ENCODE measurements at regions of chr17 and their contacts with region 1.

Region 1: DNA sequence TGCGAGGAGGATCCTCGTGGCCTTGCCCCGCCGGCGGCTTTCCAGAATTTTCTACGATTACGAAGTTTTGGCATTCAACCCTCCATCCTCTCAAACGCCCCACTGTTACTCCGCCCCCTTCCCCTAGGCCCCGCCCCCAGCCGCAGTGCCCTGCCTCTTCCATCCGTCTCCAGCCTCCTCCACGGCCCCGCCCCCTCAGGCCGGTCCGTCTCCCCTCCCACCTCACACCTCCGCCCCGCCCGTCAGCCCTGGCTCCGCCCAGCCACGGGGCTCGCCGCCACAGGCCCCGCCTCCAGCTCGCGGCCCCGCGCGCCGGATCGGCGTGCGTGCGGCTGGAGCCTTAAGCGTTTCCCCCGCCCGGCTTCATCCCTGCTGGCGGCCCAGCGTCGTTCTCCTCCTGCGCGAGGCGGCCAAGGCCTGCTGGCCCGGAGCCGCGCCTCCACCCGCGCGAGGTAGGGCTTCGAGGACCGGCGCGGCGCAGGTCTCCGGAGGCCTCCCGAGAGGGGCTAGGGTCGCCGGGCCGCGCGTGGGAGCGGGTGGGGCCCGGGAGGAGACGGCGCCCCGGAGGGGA is at the starts of genes C17orf67 and DGKE:
- DNase-seq: peak; percentile 99
- H3K4me3 ChIP-seq: peak within 1 kb of the TSS; percentile 62 to 88 (median 78)
- H3K27ac ChIP-seq: peak within 1 kb of the TSS; percentile 83 to 95 (median 88)
- H3K4me1 ChIP-seq: peaks cover 0 to 54% (median 47%) of the 10 kb centered on the region in 4 donors
- H3K27me3 ChIP-seq: no peaks in the 10 kb centered on the region
- CTCF ChIP-seq: no peak
- EP300 ChIP-seq: no peak
- POLR2A ChIP-seq: peak in 1 of 2 donors; percentile 24
- total RNA-seq, gene C17orf67: 1.8 to 2.8 (median 2.1) TPM
- total RNA-seq, gene DGKE: 20.3 to 33.8 (median 29.2) TPM

Region 2: GRCh38 chr17:56624315-56624714 is 209.6 kb before region 1 on chr17:
- intact Hi-C with region 1: no loop called
- DNase-seq: no peak
- H3K4me3 ChIP-seq: no peak overlapping the region
- H3K27ac ChIP-seq: no peak overlapping the region
- H3K4me1 ChIP-seq: peaks cover 0 to 4% (median 2%) of the 10 kb centered on the region in 4 donors
- H3K27me3 ChIP-seq: no peaks in the 10 kb centered on the region
- CTCF ChIP-seq: no peak
- EP300 ChIP-seq: no peak
- POLR2A ChIP-seq: no peak

Region 3: DNA sequence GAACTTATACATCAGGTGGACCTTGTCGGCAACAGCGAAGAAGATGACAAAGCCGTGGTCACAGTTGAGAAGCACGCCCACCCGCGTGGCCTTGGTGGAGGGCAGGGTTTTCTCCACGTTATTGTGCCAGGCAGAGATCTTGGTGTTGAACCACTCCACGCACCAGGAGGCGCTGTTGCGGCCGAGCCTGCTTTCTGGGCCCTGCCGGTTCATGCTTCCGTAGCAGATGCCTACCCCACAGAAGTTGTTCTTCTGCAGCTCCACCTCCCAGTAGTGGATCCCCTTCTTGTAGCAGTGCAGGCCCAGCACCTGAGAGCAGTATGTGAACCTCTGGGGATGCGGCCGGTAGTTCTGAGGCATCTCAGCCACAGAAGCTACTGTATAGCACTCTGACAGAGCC is 57.9 kb after region 1 on chr17:
- intact Hi-C with region 1: no loop called
- DNase-seq: no peak
- H3K4me3 ChIP-seq: no peak overlapping the region
- H3K27ac ChIP-seq: no peak overlapping the region
- H3K4me1 ChIP-seq: no peaks in the 10 kb centered on the region
- H3K27me3 ChIP-seq: no peaks in the 10 kb centered on the region
- CTCF ChIP-seq: peak in 2 of 4 experiments; percentile 24 to 31
- EP300 ChIP-seq: no peak
- POLR2A ChIP-seq: no peak

Region 4: DNA sequence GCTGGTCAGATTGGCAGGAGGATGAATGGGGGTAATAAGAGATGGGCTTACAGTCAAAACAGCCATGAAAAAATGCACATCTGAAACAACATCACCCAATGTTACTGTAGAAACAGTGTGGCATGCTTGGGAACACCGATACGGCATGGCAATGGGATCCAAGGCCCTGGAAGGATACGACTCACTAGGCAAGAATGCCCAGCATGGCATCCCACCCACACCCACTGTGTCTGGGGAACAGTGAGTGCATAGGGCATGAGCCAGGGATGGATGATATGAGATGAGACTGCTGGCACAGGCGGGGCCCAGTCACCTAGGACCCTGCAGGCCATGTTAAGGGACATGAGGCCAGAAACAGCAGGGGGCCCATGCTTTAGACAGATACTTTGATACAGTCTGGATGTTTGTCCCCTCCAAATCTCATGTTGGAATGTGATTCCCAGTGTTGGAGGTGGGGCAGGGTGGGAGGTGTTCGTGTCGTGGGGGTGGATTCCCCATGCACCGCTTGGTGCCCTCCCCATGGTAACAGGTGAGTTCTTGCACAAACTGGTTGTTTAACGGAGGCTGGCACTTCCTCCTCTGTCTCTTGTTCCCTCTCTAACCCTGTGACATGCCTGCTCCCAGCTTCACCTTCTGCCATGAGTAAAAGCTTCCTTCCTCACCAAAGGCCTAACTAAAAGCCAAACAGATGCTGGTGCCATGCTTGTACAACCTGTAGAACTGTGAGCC is 68.6 kb after region 1 on chr17:
- intact Hi-C with region 1: no loop called
- DNase-seq: no peak
- H3K4me3 ChIP-seq: no peak overlapping the region
- H3K27ac ChIP-seq: no peak overlapping the region
- H3K4me1 ChIP-seq: no peaks in the 10 kb centered on the region
- H3K27me3 ChIP-seq: no peaks in the 10 kb centered on the region
- CTCF ChIP-seq: no peak
- EP300 ChIP-seq: no peak
- POLR2A ChIP-seq: no peak

Region 5: GRCh38 chr17:56913864-56914640 is 80.2 kb after region 1 on chr17 and contains the start of gene TRIM25:
- intact Hi-C with region 1: loop called (anchors 1 kb)
- DNase-seq: peak; percentile 95
- H3K4me3 ChIP-seq: peak within 1 kb of the TSS; percentile 75 to 94 (median 86)
- H3K27ac ChIP-seq: peak within 1 kb of the TSS; percentile 87 to 92 (median 90)
- H3K4me1 ChIP-seq: peaks cover 0 to 42% (median 39%) of the 10 kb centered on the region in 4 donors
- H3K27me3 ChIP-seq: no peaks in the 10 kb centered on the region
- CTCF ChIP-seq: peak in 1 of 4 experiments; percentile 5
- EP300 ChIP-seq: no peak
- POLR2A ChIP-seq: peak; percentile 88 to 95
- total RNA-seq, gene TRIM25: 12.1 to 37.1 (median 19.9) TPM

Region 6: GRCh38 chr17:57097832-57098421 is 264.0 kb after region 1 on chr17:
- intact Hi-C with region 1: loop called (anchors 10 kb)
- DNase-seq: peak; percentile 86
- H3K4me3 ChIP-seq: no peak overlapping the region
- H3K27ac ChIP-seq: peak overlapping the region; percentile 69 to 98 (median 93)
- H3K4me1 ChIP-seq: peaks cover 0 to 95% (median 73%) of the 10 kb centered on the region in 4 donors
- H3K27me3 ChIP-seq: no peaks in the 10 kb centered on the region
- CTCF ChIP-seq: no peak
- EP300 ChIP-seq: no peak
- POLR2A ChIP-seq: no peak